ENCODE measurements at regions of chr1 and their contacts with region 1.

Region 1: DNA sequence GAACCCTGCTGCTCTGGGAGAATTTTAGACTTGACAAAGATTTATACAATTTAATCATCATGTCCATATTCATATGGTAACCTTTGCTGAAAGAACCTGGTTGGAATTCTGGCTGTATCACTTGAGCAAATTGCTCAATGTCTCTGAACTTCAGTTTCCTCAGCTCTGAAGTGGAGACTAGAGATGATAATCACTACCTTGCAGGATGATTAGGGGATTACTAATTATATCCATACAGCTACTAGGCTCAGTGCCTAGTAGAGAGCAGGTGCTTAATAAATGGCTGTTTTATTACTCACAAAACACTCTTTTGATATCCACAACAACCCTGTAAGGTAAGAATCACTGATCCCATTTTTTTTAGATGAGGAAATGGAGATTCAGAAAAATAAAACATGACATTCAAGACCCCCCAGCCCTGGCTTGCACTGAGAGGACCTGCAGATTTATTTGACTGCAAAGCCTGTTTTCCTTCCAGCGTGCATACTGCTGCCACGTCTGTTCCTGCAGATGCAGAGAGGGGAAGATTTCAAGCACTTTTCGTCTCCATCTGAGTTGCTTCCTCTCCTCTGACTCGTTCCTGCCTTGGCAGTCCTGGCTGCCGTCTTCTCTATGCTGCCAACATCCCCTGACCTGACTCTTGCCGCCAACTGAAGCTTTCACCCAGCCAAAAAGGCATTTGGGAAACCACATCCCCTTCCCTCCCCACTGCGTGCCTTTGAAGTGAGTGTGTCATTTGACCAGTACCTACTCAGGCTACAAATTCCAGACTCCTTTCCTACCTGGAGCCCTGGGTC is 203.0 kb downstream of the PLPP3 start:
- DNase-seq: peak; percentile 64 to 84
- ATAC-seq: peak; percentile 92
- H3K4me3 ChIP-seq: no peak overlapping the region
- H3K27ac ChIP-seq: peak overlapping the region; percentile 74 to 81 (median 76)
- H3K4me1 ChIP-seq: peaks cover 52 to 60% of the 10 kb centered on the region in 2 donors
- H3K27me3 ChIP-seq: no peaks in the 10 kb centered on the region
- CTCF ChIP-seq: no peak
- POLR2A ChIP-seq: no peak

Region 2: DNA sequence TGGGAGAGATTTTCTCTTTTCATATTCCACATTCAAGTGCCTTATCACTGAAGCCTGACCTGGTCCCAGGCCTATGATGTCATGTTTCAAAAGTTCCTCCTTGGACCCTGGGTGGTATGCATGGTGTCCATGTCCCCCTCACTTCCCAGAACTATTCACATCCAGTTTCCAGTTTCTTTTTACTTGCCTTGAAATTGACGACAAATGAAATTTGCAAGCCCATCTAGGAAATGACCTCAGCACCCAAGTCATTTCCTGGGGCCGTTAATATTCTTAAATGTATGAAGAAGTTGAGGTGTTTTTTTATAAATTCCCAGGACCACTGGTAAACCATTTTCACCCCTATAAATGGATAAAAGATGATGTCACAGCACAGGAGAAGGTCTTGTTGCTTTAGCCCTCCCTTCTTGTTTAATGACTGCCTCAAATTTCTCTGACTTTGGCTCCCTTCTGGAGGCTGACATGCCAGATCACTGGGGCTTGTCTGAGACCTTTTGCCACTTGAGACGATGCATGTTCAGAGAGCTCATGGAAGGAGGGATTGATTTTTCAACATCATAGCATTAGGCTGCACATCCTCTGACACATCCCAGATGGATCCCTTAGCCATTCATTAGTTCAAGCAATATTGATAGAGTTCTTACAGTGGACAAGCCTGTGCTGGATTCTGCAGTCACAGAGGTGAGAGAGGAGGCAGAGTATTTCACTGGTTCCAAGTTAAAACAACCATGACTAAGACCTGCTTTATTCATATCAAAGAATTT is 18.3 kb before region 1 on chr1:
- in situ Hi-C with region 1: no loop called
- intact Hi-C with region 1: loop called (anchors 1 kb)
- DNase-seq: no peak
- ATAC-seq: no peak
- H3K4me3 ChIP-seq: no peak overlapping the region
- H3K27ac ChIP-seq: peak overlapping the region; percentile 73 to 92 (median 82)
- H3K4me1 ChIP-seq: peaks cover 50 to 54% of the 10 kb centered on the region in 2 donors
- H3K27me3 ChIP-seq: no peaks in the 10 kb centered on the region
- CTCF ChIP-seq: no peak
- POLR2A ChIP-seq: no peak